ENCODE measurements at regions of chrX and their contacts with region 1.

Region 1: DNA sequence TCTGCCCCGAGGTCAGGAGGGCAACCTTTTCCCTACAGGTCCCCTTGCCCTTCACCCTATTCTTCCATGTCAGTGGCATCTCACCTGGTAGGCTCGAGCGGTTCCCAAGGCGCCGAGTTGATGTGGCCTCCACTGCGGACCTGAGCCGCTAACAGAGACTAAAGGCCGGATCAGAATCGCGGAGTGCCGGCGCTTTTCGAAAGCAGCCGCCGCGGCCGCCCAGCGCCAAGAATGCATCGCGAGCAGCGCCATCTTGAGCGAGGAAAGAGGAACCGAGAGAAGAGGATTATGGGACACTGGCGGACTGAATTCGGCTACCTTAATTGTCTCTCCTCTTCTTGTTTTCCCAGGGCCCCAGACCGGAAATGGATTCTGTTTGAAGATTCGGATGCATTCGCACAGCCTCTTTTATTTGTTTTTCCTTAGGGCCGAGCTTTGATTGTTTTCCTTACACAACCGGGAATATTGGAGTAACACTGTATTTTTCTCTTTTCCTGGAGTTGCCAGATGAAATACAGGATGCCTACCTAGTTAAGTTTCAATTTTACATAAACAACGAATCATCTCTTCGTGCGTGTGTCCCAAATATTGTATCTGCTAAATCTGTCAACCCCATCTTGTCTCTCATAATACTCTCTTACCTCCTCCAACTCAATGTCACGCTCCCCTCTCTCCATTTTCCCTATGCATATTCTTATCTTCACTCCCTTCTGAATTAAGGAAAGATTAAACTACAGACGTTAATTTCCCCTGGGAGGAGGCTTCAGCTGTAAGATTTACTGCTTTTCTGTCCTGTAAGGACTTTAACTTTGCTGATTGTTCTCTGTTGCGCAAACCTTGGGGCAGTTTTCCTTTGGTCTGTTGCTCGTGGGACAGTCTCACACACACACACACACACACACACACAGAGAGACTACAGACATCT is at the start of gene ABCB7:
- DNase-seq: peak; percentile 62
- H3K4me3 Mint-ChIP-seq: peak within 1 kb of the TSS; percentile 95
- H3K27ac Mint-ChIP-seq: peak within 1 kb of the TSS; percentile 97
- H3K4me1 Mint-ChIP-seq: peaks cover 19% of the 10 kb centered on the region
- H3K27me3 Mint-ChIP-seq: no peaks in the 10 kb centered on the region
- CTCF ChIP-seq: no peak
- total RNA-seq, gene ABCB7: 16.8 and 19.1 TPM in 2 replicates

Region 2: DNA sequence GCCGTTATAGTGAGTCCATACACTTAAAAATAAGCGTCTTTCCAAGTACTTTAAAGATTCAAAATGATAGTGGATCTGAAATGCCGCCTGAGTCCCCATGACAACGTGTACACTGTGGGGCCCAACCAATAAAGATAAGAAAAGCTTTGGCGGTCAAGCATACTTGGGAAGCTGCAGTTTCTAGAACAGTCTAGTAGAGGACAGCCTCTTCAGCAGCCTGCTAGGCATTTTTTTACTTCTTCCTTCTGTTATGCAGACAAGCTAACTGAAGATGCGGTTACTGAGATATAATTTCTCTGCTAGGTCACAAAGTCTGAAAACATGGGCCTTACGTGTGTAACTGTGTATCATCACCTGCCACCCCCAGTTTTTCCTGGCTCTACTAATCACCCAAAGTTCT is 117.2 kb after region 1 on chrX:
- CTCF ChIA-PET with region 1: no interaction called
- intact Hi-C with region 1: loop called (anchors 10 kb)
- DNase-seq: no peak
- H3K4me3 Mint-ChIP-seq: peak overlapping the region; percentile 84
- H3K27ac Mint-ChIP-seq: peak overlapping the region; percentile 73
- H3K4me1 Mint-ChIP-seq: peaks cover 17% of the 10 kb centered on the region
- H3K27me3 Mint-ChIP-seq: no peaks in the 10 kb centered on the region
- CTCF ChIP-seq: no peak

Region 3: GRCh38 chrX:76172325-76172893 is 1016.1 kb after region 1 on chrX:
- CTCF ChIA-PET with region 1: no interaction called
- intact Hi-C with region 1: loop called (anchors 5 kb)
- DNase-seq: no peak
- H3K4me3 Mint-ChIP-seq: peak overlapping the region; percentile 92
- H3K27ac Mint-ChIP-seq: peak overlapping the region; percentile 95
- H3K4me1 Mint-ChIP-seq: peaks cover 35% of the 10 kb centered on the region
- H3K27me3 Mint-ChIP-seq: no peaks in the 10 kb centered on the region
- CTCF ChIP-seq: no peak